Ascending aorta (tissue), 2 donors: ENCODE measurements at regions of chr2 and their contacts with region 1.

Region 1: DNA sequence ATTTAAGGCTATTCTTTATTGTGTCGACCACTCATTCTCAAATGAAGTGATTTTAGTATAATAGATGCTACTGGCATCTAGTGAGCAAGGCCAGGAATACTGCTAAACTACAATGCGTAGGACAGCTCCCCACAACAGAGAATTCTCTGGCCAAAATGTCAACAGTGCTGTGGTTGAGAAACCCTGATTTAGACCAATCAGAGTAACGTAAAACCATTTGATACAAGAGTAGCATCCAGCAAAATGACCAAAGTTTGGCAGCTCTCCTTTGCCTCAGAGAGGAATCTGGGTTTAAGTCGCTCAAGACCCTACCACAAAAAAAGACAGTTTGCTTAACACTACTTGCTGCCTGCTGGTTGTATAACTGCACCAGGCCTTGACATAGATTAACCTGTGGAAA is 37.0 kb upstream of the TTN start:
- DNase-seq: no peak
- H3K4me3 ChIP-seq: no peak overlapping the region
- H3K27ac ChIP-seq: peak overlapping the region; percentile 51 to 69
- H3K4me1 ChIP-seq: peaks cover 0 to 29% of the 10 kb centered on the region in 2 donors
- H3K27me3 ChIP-seq: no peaks in the 10 kb centered on the region
- CTCF ChIP-seq: no peak

Region 2: DNA sequence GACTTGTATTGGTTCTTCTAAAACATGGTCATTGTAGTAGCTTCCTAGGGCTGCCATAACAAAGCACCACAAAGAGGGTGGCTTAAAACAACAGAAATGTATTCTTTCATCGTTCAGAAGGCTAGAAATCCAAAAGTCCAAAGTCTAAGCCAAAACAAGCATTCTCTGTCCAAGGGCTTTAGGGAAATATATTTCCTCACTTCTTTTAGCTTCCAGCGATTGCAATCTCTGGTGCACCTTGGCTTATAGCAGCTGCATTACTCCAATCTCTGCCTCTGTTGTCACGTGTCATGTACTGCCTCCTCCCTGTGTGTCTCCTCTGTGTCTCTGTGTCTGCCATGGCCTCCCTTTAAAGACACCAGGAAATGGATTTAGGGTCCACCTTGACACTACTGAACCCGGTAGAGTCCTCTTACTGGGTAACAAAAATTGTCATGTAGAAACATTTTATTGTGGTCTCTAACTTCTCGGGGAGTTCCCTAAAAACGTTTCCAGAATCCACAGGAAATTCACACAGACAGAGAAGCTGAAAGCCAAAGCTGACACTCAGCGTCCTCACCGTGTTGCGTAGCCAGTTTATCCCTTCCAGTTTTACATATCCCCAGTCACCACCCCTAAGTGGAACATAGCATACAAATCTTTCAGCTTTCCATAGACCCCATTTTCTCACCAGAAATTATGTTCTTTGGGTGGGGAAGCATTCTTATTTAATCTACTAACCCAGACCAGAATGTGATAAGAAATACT is 16.4 kb before region 1 on chr2:
- intact Hi-C with region 1: loop called (anchors 1 kb)
- DNase-seq: no peak
- H3K4me3 ChIP-seq: peak overlapping the region in 1 of 2 donors; percentile 29
- H3K27ac ChIP-seq: peak overlapping the region; percentile 26 to 45
- H3K4me1 ChIP-seq: peaks cover 0 to 19% of the 10 kb centered on the region in 2 donors
- H3K27me3 ChIP-seq: no peaks in the 10 kb centered on the region
- CTCF ChIP-seq: no peak